Sciatic nerve (tissue), 2 donors: ENCODE measurements at regions of chr1 and their contacts with region 1.

Region 1: GRCh38 chr1:26145041-26145959 is 13.6 kb upstream of the FAM110D start:
- DNase-seq: peak; percentile 84
- ATAC-seq: peak; percentile 91

Region 2: GRCh38 chr1:26109229-26110164 is 35.8 kb before region 1 on chr1:
- intact Hi-C with region 1: loop called (anchors 5 kb)
- DNase-seq: no peak
- ATAC-seq: no peak